BJ (cell line): ENCODE measurements at regions of chr5 and their contacts with region 1.

Region 1: GRCh38 chr5:133968049-133968980 is at the start of gene C5orf15:
- DNase-seq: peak; percentile 84
- H3K4me3 ChIP-seq: peak within 1 kb of the TSS; percentile 99
- H3K27me3 ChIP-seq: no peaks in the 10 kb centered on the region
- CTCF ChIP-seq: peak; percentile 26; the same call in 1 of the 2 replicates
- polyA plus RNA-seq, gene C5orf15: 48.1 and 85.5 TPM in 2 replicates

Region 2: GRCh38 chr5:133032852-133033742 is 935.2 kb before region 1 on chr5:
- CTCF ChIA-PET with region 1: no interaction called
- POLR2A ChIA-PET with region 1: no interaction called
- DNase-seq: no peak
- H3K4me3 ChIP-seq: no peak overlapping the region
- H3K27me3 ChIP-seq: no peaks in the 10 kb centered on the region
- CTCF ChIP-seq: no peak

Region 3: DNA sequence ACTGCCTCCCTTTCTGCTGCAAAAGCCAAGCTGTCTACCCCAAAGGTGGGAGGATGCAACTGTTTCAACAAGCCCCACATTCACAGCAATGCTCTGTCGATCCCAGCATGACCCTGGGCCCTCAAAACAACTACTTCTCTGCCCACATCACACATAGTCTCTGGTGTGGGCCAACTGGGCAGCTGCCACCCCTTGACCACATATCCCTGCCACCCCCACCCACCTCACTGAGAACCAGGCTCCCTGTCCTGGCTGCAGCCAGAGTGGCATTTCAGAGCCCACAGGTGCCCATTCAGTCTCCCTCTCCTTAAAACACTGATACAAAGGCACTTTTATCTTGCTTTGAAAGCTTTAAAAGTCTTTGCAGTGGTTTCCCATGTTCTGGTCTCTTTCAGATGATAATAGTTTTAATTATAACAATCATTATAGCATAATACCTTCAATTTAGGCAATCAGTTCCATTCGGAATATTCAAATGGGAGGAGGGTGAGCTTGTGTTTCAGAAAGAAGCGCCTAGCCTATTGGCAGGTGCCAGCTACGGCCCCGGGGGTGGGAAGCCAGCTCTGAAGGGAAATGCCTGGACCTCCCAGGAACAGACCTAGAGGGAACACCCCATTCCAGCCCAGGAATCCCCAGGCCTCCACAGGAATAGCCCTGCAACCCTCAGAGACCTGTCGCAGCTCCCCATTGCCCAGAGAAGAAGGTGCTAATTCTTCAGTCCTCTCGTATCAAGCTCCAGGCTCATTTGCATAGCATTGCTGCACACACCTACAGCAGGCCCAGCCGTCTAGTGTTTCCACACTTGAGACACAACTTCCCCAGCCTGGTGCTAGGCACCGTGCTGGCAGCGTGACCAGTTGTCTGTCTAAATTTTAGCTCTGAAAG is 90.7 kb before region 1 on chr5:
- CTCF ChIA-PET with region 1: no interaction called
- POLR2A ChIA-PET with region 1: no interaction called
- DNase-seq: no peak
- H3K4me3 ChIP-seq: no peak overlapping the region
- H3K27me3 ChIP-seq: peaks cover 6% of the 10 kb centered on the region
- CTCF ChIP-seq: no peak

Region 4: DNA sequence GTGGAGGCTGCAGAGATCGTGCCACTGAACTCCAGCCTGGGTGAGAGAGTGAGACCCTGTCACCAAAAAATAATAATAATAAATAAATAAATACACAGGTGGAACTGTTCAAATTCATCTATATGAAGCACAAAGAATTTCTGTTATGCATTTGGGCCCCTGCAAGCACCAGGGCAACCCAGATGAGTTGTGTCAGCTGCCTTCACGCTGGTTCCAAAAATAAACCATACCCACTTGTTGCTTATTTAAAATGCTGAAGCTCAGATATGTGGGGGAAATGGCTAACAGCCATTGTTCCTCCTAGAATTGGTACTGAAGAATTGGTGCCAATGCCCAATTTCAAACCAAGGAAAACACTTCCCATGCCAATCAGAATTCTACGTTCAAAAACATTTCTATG is 10.6 kb after region 1 on chr5:
- CTCF ChIA-PET with region 1: interaction called, 16 read pairs
- POLR2A ChIA-PET with region 1: interaction called, 3 read pairs
- DNase-seq: no peak
- H3K4me3 ChIP-seq: no peak overlapping the region
- H3K27me3 ChIP-seq: no peaks in the 10 kb centered on the region
- CTCF ChIP-seq: no peak

Region 5: DNA sequence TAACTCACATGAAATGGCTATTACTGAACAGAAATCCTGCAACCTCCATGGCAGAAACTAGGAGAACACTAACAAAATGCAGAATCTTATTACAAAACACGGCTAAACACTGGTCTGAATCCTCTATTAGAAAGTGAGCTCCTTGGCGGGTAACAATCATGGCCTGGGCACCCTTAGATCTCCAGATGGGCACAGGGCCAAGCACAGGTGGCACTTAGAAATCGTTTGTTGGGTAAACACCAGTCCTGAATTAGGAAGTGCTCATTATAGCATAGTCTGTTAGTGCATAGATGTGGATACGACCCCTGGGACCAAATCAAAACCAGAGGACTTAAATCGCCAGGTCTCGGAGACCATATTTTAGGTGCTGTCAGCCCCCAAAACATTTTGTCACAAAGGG is 22.1 kb after region 1 on chr5:
- CTCF ChIA-PET with region 1: no interaction called
- POLR2A ChIA-PET with region 1: no interaction called
- DNase-seq: no peak
- H3K4me3 ChIP-seq: no peak overlapping the region
- H3K27me3 ChIP-seq: no peaks in the 10 kb centered on the region
- CTCF ChIP-seq: no peak

Region 6: DNA sequence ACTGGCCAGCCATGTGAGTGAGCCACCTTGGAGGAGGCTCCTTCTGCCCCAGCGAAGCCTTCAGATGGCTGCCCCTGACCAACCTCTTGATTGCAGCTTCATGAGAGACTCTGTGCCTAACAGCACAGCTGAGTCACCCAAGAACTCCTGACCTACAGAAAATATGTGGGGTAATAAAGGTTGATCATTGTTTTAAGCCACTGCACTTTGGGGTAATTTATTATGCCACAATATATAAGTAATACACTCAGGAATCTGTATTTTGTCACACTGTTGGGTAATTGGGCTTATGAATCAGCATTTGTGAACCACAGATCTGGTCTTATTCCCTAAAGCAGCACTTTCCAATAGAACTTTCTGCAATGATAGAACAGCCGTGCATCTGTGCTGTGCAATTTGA is 60.8 kb after region 1 on chr5:
- CTCF ChIA-PET with region 1: no interaction called
- POLR2A ChIA-PET with region 1: no interaction called
- DNase-seq: peak; percentile 96
- H3K4me3 ChIP-seq: no peak overlapping the region
- H3K27me3 ChIP-seq: peaks cover 15% of the 10 kb centered on the region
- CTCF ChIP-seq: no peak